Heart left ventricle (tissue), 16 donors: ENCODE measurements at regions of chr12 and their contacts with region 1.

Region 1: DNA sequence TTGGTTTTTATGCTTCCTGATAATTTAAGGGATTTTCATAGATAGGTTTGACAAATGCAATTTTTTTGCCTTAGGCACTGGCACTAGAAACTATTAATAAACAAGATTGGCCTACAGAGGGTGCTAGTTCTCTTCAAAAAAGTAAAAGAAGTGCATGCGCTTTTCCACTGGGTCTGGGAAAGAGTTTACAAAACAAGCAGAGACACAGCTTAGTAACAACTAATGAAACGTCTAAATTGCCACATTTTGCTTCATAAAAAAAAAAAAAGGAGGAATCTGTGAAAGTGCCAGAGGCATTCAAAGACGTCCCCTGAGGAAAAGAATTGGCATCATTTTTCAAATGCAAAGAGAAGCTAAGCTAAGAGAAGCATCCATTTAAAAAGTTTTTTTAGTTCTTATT is 58.3 kb upstream of the EEA1 start:
- DNase-seq: peak in 1 of 5 donors; percentile 21
- ATAC-seq: peak; percentile 59 to 86 (median 76)
- H3K4me3 ChIP-seq: peak overlapping the region in 1 of 12 donors; percentile 4
- H3K27ac ChIP-seq: peak overlapping the region in 11 of 12 donors; percentile 10 to 79 (median 59)
- H3K4me1 ChIP-seq: peaks cover 0 to 20% (median 6%) of the 10 kb centered on the region in 12 donors
- H3K27me3 ChIP-seq: no peaks in the 10 kb centered on the region
- CTCF ChIP-seq: peak; percentile 40 to 78 (median 64)
- POLR2A ChIP-seq: no peak

Region 2: DNA sequence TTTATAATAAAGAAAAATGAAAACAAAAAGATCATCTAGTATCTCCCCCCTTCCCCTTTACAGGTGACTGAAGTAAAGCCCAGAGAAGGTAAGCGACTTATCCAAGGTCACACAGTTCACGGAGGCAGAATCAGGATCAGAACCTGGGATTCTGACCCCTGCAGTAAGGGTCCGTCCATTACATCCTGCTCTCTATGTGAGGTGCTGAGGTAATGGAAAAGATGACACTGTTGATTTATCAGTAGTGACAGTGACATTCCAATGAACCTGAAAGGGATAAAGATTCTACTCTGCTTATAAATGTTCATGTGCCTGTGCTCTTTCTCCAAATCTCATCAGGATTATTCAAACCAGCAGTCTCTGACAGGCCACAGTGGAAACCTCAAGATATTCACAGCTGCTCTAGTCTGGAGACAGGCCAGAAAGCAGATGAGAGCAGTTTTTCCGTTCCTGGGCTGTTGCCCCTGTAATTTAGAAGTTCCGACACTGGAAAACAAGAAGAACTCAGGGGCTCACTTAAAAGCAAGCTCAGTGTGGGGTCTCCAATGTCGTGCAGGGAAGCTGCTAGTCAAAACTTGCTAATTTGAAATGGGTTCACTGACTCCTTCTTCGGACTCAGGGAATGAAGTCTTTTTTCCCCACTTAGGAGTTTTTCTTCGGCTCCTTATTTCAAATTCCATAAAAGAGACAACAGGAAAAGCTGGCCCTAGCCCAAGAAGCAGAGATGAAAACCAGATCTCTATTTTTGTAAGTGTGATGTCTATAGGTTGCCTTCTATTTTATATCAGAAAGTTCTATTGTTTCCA is 73.5 kb after region 1 on chr12:
- intact Hi-C with region 1: loop called in 1 of 10 experiments (anchors 2 kb)
- DNase-seq: peak in 4 of 5 donors; percentile 39 to 56 (median 48)
- ATAC-seq: peak; percentile 38 to 75 (median 60)
- H3K4me3 ChIP-seq: peak overlapping the region in 6 of 12 donors; percentile 2 to 35 (median 24)
- H3K27ac ChIP-seq: peak overlapping the region; percentile 62 to 94 (median 82)
- H3K4me1 ChIP-seq: peaks cover 0 to 40% (median 23%) of the 10 kb centered on the region in 12 donors
- H3K27me3 ChIP-seq: no peaks in the 10 kb centered on the region
- CTCF ChIP-seq: peak in 3 of 12 donors; percentile 30 to 32 (median 31)
- POLR2A ChIP-seq: no peak

Region 3: GRCh38 chr12:93397412-93397811 is 410.1 kb after region 1 on chr12:
- intact Hi-C with region 1: loop called in 8 of 10 experiments (anchors 2 to 5 kb)
- DNase-seq: peak in 1 of 5 donors; percentile 25
- ATAC-seq: no peak
- H3K4me3 ChIP-seq: no peak overlapping the region
- H3K27ac ChIP-seq: peak overlapping the region in 4 of 12 donors; percentile 3 to 36 (median 30)
- H3K4me1 ChIP-seq: peaks cover 0 to 19% (median 6%) of the 10 kb centered on the region in 12 donors
- H3K27me3 ChIP-seq: no peaks in the 10 kb centered on the region
- CTCF ChIP-seq: no peak
- POLR2A ChIP-seq: no peak

Region 4: DNA sequence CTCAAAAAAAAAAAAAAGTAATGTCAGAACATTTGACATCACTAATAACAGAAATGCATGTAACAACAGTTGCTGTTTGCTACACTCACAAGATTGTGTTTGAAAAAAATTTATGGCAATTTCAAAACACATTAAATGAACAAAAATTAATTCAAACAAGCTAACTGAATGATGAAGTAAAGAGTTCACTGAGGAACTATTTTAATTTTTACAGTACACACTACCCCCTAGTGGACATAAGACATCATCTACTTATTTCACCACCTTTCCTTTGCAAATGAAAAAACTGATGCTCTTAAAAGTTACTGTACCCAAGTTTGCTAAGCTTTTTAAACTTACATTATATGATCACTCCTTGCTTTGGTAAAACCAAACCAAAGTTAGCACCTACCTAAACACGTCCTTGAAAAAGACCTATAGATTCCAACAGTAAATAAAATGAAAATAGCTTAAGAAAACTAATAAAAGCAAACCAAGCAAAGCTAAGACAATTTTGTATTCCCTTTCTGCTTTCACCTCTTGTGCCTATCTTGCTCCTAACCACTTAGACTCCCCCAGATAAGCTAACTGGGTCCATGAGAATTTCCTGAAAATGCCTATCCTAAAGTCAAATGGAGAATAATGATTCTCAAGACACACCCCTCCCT is 432.1 kb after region 1 on chr12:
- intact Hi-C with region 1: loop called in 9 of 10 experiments (anchors 1 to 10 kb)
- DNase-seq: no peak
- ATAC-seq: peak in 3 of 4 donors; percentile 43 to 54 (median 43)
- H3K4me3 ChIP-seq: peak overlapping the region in 1 of 12 donors; percentile 4
- H3K27ac ChIP-seq: peak overlapping the region in 2 of 12 donors; percentile 25 to 41
- H3K4me1 ChIP-seq: peaks cover 0 to 80% (median 47%) of the 10 kb centered on the region in 12 donors
- H3K27me3 ChIP-seq: no peaks in the 10 kb centered on the region
- CTCF ChIP-seq: peak; percentile 57 to 78 (median 70)
- POLR2A ChIP-seq: no peak